Transverse colon (tissue), 4 donors: ENCODE measurements at regions of chr12 and their contacts with region 1.

Region 1: DNA sequence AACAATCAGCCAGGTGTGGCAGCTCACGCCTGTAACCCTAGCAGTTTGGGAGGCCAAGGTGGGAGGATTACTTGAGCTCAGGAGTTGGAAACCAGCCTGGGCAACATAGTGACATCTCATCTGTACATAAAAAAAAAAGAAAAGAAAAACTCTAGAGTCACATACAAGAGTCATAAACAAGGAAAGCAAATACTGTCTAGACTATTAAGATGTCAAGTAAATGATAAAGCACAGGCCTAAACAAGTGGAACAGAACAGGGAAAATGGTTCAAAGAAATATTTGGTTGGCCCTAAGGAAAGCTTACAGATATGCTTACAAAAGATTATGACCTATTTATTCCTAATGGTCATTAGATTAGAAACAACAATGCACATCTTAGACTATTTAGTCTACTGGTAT is 12.3 kb downstream of the CDK17 start:
- DNase-seq: no peak
- H3K4me3 ChIP-seq: no peak overlapping the region
- H3K27ac ChIP-seq: peak overlapping the region in 3 of 4 donors; percentile 23 to 31 (median 31)
- H3K4me1 ChIP-seq: peaks cover 0 to 48% (median 11%) of the 10 kb centered on the region in 4 donors
- H3K27me3 ChIP-seq: no peaks in the 10 kb centered on the region
- CTCF ChIP-seq: no peak
- EP300 ChIP-seq: no peak
- POLR2A ChIP-seq: no peak

Region 2: DNA sequence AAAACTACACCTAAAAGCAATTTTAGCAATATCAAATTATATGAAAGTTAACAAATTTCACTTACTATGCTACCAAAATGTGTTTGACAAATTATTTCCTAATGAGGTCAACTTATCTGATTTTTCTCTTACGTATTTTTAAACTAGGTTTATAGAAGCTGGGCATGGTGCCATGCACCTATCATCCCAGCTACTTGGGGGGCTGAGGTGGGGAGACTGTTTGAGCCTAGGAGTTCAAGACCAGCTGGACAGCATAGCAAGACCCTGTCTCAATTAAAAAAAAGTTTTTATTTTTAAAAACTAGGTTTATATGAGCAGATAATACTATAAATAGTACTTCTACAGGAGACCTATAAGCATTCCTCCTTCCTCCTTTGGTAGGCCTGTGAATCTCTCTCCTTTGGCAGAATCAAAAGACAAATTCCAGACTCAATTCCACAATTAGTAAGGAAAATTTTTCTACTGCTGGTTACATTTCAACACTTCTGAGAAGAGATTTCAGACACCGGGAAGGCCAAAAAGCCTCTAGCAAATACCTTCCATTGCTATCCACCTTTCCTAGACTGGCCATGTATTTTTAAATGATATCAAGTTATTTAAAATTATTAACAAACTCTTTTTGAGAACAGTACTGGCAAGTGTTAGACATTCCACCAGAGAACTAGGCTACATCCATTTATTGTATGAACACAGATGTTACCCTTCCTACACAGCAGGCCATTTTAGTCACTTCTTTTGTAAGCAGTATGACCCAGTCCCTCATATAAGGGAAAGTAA is 22.2 kb before region 1 on chr12:
- in situ Hi-C with region 1: no loop called
- intact Hi-C with region 1: loop called (anchors 2 kb)
- DNase-seq: no peak
- H3K4me3 ChIP-seq: no peak overlapping the region
- H3K27ac ChIP-seq: peak overlapping the region; percentile 2 to 48 (median 24)
- H3K4me1 ChIP-seq: peaks cover 8 to 56% (median 19%) of the 10 kb centered on the region in 4 donors
- H3K27me3 ChIP-seq: no peaks in the 10 kb centered on the region
- CTCF ChIP-seq: no peak
- EP300 ChIP-seq: no peak
- POLR2A ChIP-seq: no peak